Astrocyte of the cerebellum (primary cell): ENCODE measurements at regions of chr6 and their contacts with region 1.

Region 1: GRCh38 chr6:157323255-157323965 is at the start of gene TMEM242:
- DNase-seq: peak; percentile 85
- H3K4me3 ChIP-seq: peak within 1 kb of the TSS; percentile 73
- CTCF ChIP-seq: peak; percentile 36

Region 2: DNA sequence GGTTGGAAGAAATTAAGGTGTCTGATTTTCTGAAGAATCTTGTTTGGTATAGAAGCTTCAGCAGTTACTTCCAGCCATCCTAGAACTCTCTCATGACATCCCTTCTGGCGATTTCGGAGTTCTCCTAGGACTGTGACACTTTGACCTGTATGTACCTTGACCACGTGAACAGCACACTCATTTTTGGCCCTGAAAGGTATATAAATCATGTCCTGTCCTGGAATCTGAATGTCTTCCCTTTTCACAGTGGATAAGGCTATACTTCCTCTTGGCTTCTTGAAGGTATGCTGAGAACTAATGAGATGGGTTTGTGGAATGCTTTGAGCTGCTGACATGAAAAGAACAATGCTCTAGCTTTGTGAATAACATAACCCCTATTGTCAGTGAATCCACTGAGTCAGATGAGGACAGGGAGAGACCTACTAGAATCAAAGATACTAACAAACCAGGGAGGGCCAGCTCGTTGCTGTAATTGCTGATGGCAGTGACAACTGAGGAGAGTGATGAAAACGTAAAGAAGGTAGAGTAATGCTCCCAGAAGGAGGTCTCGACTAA is 51.6 kb after region 1 on chr6:
- in situ Hi-C with region 1: loop called (anchors 5 kb)
- DNase-seq: no peak
- H3K4me3 ChIP-seq: no peak overlapping the region
- CTCF ChIP-seq: no peak

Region 3: GRCh38 chr6:157579467-157580031 is 256.1 kb after region 1 on chr6:
- in situ Hi-C with region 1: no loop called
- DNase-seq: no peak
- H3K4me3 ChIP-seq: no peak overlapping the region
- CTCF ChIP-seq: no peak

Region 4: DNA sequence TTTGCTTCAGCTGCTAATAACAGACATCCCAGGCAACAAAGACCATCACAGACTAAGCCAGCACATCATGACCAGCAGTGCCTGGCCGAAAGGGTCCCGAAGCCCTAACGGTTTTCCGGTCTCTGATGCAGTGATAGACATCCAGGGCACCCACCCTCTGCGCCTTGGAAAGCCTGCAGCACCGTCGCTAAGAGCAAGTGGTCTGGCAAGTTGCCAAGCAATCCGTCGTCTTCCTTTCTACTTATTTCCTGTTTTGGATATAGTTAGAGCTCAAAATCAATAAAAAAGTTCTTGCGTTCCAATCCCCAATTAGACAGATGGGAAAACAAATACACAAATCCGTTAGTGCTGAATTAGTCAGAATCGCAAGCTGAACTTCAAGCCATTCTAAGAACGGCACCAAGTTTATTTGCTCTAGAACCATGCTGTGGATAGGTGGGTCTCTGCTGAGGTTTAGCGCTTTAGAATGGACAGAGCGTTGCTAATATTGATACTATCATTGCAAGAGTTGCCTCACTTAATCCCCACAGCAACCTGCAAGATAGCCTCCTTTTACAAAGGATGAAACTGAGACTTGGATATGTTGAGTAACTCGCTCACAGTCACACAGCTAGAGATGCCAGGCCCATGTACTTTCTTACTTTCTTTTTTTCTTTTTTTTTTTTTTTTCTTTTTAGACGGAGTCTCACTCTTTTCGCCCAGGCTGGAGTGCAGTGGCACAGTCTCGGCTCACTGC is 336.3 kb after region 1 on chr6:
- in situ Hi-C with region 1: loop called (anchors 5 kb)
- DNase-seq: no peak
- H3K4me3 ChIP-seq: no peak overlapping the region
- CTCF ChIP-seq: no peak

Region 5: GRCh38 chr6:157879873-157880254 is 556.5 kb after region 1 on chr6:
- in situ Hi-C with region 1: loop called (anchors 5 kb)
- DNase-seq: no peak
- H3K4me3 ChIP-seq: no peak overlapping the region
- CTCF ChIP-seq: no peak